IMR-90 (cell line): ENCODE measurements at regions of chr20 and their contacts with region 1.

Region 1: GRCh38 chr20:8621001-8621400 is 447.9 kb upstream of the PLCB4 start:
- DNase-seq: no peak
- ATAC-seq: no peak
- H3K4me3 ChIP-seq: no peak overlapping the region
- H3K27ac ChIP-seq: no peak overlapping the region
- H3K4me1 ChIP-seq: no peaks in the 10 kb centered on the region; the same call in 1 of the 2 replicates
- H3K27me3 ChIP-seq: no peaks in the 10 kb centered on the region
- CTCF ChIP-seq: no peak
- POLR2A ChIP-seq: no peak
- RAD21 ChIP-seq: no peak

Region 2: GRCh38 chr20:8571611-8572010 is 49.4 kb before region 1 on chr20:
- CTCF ChIA-PET with region 1: no interaction called
- POLR2A ChIA-PET with region 1: no interaction called
- dilution Hi-C with region 1: no loop called
- in situ Hi-C with region 1: loop called (anchors 5 kb)
- intact Hi-C with region 1: no loop called
- DNase-seq: no peak
- ATAC-seq: no peak
- H3K4me3 ChIP-seq: no peak overlapping the region
- H3K27ac ChIP-seq: no peak overlapping the region
- H3K4me1 ChIP-seq: peaks cover 3% of the 10 kb centered on the region
- H3K27me3 ChIP-seq: no peaks in the 10 kb centered on the region
- CTCF ChIP-seq: no peak
- POLR2A ChIP-seq: no peak
- RAD21 ChIP-seq: no peak

Region 3: GRCh38 chr20:8800089-8800488 is 179.1 kb after region 1 on chr20:
- CTCF ChIA-PET with region 1: no interaction called
- POLR2A ChIA-PET with region 1: no interaction called
- dilution Hi-C with region 1: no loop called
- in situ Hi-C with region 1: no loop called
- intact Hi-C with region 1: no loop called
- DNase-seq: no peak
- ATAC-seq: no peak
- H3K4me3 ChIP-seq: no peak overlapping the region
- H3K27ac ChIP-seq: no peak overlapping the region
- H3K4me1 ChIP-seq: peaks cover 2% of the 10 kb centered on the region; the same call in 1 of the 2 replicates
- H3K27me3 ChIP-seq: no peaks in the 10 kb centered on the region
- CTCF ChIP-seq: no peak
- POLR2A ChIP-seq: no peak
- RAD21 ChIP-seq: no peak